ENCODE measurements at regions of chr2 and their contacts with region 1.

Region 1: GRCh38 chr2:212686285-212686895 is 147.8 kb upstream of the ERBB4 start:
- DNase-seq: peak; percentile 72
- H3K4me3 Mint-ChIP-seq: no peak overlapping the region
- H3K27ac Mint-ChIP-seq: no peak overlapping the region
- H3K4me1 Mint-ChIP-seq: no peaks in the 10 kb centered on the region
- H3K27me3 Mint-ChIP-seq: no peaks in the 10 kb centered on the region

Region 2: DNA sequence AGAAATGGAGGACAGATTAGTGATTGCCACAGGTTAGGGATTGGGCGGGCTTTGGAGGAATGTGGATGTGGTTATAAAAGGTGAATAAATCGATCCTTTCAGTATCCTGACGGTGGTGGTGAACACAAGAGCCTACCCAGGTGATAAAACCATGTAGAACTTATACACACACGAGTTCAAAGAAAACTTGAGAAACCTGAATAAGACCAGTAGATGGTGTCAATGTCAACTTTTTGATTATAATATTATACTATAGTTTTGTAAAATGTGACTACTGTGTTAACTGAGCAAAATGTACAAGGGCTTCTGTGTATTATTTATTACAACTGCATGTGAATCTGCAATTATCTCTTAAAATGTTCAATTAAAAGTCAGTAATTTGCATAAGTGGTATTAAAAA is 284.1 kb before region 1 on chr2:
- CTCF ChIA-PET with region 1: no interaction called
- intact Hi-C with region 1: no loop called
- DNase-seq: no peak
- H3K4me3 Mint-ChIP-seq: no peak overlapping the region
- H3K27ac Mint-ChIP-seq: no peak overlapping the region
- H3K4me1 Mint-ChIP-seq: no peaks in the 10 kb centered on the region
- H3K27me3 Mint-ChIP-seq: no peaks in the 10 kb centered on the region

Region 3: DNA sequence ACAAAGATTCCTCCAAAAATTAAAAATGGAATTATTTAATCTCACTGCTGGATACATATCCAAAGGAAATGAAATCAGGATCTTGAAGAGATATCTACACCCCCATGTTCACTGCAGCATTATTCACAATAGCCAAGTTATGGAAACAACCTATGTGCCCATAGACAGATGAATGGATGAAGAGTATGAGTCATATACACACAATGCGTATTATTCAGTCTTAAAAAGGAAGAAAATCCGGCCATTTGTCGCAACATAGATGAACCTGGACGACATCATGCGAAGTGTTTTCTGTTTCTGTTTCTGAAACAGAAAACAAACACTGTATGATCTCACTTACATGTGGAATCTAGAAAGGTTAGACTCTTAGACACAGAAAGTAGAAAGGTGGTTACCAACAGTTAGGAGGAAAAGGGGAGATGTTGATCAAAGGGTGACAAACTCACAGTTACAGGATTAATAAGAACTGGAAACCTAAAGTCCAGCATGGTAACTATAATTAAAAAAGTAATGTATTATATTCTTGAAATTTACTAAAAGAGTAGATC is 59.9 kb before region 1 on chr2:
- CTCF ChIA-PET with region 1: no interaction called
- intact Hi-C with region 1: no loop called
- DNase-seq: no peak
- H3K4me3 Mint-ChIP-seq: no peak overlapping the region
- H3K27ac Mint-ChIP-seq: no peak overlapping the region
- H3K4me1 Mint-ChIP-seq: no peaks in the 10 kb centered on the region
- H3K27me3 Mint-ChIP-seq: no peaks in the 10 kb centered on the region

Region 4: GRCh38 chr2:212843409-212844199 is 157.2 kb after region 1 on chr2:
- CTCF ChIA-PET with region 1: no interaction called
- intact Hi-C with region 1: loop called (anchors 10 kb)
- DNase-seq: no peak
- H3K4me3 Mint-ChIP-seq: no peak overlapping the region
- H3K27ac Mint-ChIP-seq: no peak overlapping the region
- H3K4me1 Mint-ChIP-seq: no peaks in the 10 kb centered on the region
- H3K27me3 Mint-ChIP-seq: peaks cover 5% of the 10 kb centered on the region